ENCODE measurements at regions of chr1 and their contacts with region 1.

Region 1: DNA sequence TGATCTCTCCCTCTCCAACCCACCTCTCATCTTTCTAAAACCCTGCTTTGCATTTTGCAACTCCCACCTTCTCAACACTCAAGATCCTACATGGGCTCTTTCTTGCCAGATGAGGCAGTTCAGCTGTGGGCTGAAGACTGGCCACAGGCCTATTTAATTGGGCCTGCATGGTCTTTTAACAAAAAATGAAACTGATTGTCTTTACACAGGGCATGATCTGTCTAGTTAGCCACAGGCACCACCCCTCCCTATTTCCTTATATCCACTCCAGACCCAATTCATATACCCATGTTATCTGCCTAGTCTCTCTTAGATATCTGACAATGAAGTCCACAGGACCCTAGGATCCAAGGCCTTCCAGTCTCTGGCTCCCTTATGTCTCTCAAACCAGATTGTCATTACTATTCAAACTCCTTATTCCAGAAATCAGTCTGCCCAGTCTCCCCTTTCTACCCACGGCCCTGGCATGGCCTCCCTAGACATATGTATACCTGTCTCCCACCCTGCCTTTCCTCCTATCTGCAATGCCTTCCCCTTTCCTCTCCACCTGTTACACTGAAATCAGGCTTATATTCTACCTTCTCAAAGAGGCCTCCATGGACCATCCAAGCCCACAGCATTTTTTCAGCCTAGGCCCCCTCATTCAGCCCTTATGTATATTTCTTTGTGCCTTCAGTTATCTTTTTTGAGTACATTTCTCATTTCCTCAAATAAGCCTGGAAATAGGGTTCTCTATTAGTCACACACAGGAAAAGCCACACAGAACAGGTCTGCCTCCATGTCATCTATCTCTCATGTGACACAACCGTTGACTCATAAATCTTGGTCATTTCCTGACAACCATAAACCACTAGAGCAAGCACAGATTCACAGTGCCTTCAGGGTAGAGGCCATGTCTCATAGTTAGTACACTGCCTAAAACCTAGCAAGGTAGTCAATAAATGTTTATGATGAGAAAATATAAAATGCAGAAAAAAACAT is 39.0 kb downstream of the LPAR3 start:
- DNase-seq: no peak
- ATAC-seq: peak; percentile 97
- H3K4me3 Mint-ChIP-seq: no peak overlapping the region
- H3K27ac Mint-ChIP-seq: peak overlapping the region; percentile 32
- H3K4me1 Mint-ChIP-seq: peaks cover 16% of the 10 kb centered on the region
- H3K27me3 Mint-ChIP-seq: no peaks in the 10 kb centered on the region
- CTCF ChIP-seq: no peak

Region 2: DNA sequence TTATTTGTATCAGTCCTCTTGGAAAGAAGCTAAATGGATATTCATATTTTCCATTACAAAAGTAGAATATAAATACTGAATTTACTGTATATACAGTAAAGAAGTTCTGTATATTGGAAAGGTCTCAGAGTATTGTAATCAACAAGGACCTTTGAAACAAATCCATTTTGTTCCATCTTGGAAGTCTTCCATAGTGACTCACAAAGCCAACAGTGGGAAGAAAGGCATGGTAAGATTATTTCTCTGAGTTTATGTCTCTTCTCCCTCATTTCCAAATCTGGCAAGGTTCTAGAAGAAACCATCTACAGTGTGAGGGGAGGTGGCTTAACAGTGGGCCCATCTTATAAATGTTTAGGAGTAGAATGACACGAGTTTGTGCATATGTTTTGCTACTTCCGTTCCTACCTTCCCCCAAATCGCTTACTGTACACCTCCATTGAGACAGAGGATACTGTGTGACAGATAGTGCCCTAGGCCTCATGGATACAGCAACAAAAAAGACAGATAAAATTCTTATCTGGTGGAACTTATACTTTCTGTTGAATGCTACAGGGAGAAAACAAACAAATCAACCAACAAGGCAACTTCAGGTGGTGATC is 141.7 kb before region 1 on chr1:
- CTCF ChIA-PET with region 1: no interaction called
- POLR2A ChIA-PET with region 1: no interaction called
- intact Hi-C with region 1: no loop called
- DNase-seq: no peak
- ATAC-seq: no peak
- H3K4me3 Mint-ChIP-seq: no peak overlapping the region
- H3K27ac Mint-ChIP-seq: no peak overlapping the region
- H3K4me1 Mint-ChIP-seq: no peaks in the 10 kb centered on the region
- H3K27me3 Mint-ChIP-seq: peaks cover 3% of the 10 kb centered on the region
- CTCF ChIP-seq: no peak

Region 3: GRCh38 chr1:84869720-84870119 is 15.7 kb after region 1 on chr1:
- CTCF ChIA-PET with region 1: no interaction called
- POLR2A ChIA-PET with region 1: no interaction called
- intact Hi-C with region 1: loop called (anchors 2 kb)
- DNase-seq: no peak
- ATAC-seq: no peak
- H3K4me3 Mint-ChIP-seq: no peak overlapping the region
- H3K27ac Mint-ChIP-seq: no peak overlapping the region
- H3K4me1 Mint-ChIP-seq: no peaks in the 10 kb centered on the region
- H3K27me3 Mint-ChIP-seq: peaks cover 6% of the 10 kb centered on the region
- CTCF ChIP-seq: no peak

Region 4: GRCh38 chr1:85957760-85958159 is 1103.7 kb after region 1 on chr1:
- CTCF ChIA-PET with region 1: no interaction called
- POLR2A ChIA-PET with region 1: no interaction called
- intact Hi-C with region 1: no loop called
- DNase-seq: no peak
- ATAC-seq: no peak
- H3K4me3 Mint-ChIP-seq: no peak overlapping the region
- H3K27ac Mint-ChIP-seq: no peak overlapping the region
- H3K4me1 Mint-ChIP-seq: no peaks in the 10 kb centered on the region
- H3K27me3 Mint-ChIP-seq: no peaks in the 10 kb centered on the region
- CTCF ChIP-seq: no peak